ENCODE measurements at regions of chr14 and their contacts with region 1.

Region 1: DNA sequence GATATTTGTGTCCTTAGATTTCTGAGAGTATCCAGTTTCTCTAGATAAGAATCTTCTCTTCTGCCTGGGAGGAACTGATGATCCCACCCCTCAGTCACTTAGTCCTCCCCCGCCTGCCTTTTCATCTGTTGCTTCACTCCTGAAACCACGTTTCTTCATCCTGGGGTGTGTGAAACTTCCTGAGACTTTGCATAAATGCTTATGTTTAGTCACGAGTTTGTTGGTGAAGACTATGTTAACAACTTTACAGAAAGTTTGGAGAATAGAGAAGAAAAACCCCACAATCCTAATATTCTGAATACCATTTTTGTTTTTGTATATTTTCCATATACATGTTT is 33.2 kb downstream of the MARK3 start:
- DNase-seq: peak; percentile 67
- H3K4me3 ChIP-seq: no peak overlapping the region
- H3K27ac ChIP-seq: peak overlapping the region; percentile 53
- H3K4me1 ChIP-seq: peaks cover 26% of the 10 kb centered on the region
- H3K27me3 ChIP-seq: no peaks in the 10 kb centered on the region
- CTCF ChIP-seq: no peak

Region 2: GRCh38 chr14:103518422-103519042 is 100.1 kb after region 1 on chr14:
- CTCF ChIA-PET with region 1: no interaction called
- POLR2A ChIA-PET with region 1: interaction called, 12 read pairs
- intact Hi-C with region 1: no loop called
- DNase-seq: peak; percentile 67
- H3K4me3 ChIP-seq: no peak overlapping the region
- H3K27ac ChIP-seq: peak overlapping the region; percentile 42
- H3K4me1 ChIP-seq: peaks cover 18% of the 10 kb centered on the region
- H3K27me3 ChIP-seq: no peaks in the 10 kb centered on the region
- CTCF ChIP-seq: peak; percentile 95